ENCODE measurements at regions of chrX and their contacts with region 1.

Region 1: DNA sequence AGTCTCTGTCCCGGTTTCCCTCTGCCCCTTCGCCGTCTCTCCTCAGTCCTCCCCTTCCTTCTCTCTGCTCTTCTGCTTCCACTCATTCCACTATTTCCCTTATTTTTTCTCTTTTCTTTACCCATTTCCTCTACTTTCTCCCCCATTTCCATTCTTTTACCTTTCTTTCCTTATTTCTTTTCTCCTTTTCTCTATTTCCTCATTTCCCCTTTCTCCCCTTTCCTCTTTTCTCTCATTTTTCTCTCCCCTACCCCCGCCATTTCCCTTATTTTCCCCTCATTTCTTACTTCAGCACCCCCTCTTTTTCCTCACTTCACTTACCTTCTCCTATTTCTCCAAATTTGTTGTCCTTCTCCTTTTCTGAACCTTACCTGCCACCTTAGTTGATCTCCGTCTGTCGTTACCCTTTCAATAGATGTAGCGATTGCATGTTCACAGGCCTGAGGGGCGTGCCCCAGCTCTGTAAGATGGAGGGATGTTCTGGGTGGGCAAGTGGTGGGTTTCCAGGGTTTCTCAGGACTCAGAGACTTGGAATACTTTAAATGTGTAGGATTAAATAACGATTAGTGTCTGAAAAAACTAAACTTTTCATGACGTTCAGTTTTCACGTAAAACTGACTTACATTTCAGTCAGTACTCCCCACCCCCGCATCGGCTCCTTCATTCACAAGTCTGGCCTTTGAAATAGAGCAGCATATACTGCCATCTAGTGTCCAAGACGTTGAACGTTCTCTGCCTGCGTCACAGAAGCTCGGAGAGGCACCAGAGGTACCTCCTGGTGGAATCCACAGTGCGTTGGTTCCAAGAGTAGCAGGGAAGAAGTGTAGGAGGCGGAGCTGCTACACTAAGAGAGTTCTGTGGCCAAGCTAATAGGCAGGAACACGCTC is 641 bp upstream of the NCBP2L start:
- DNase-seq: peak; percentile 61 to 76
- ATAC-seq: peak; percentile 70 to 78 (median 73)
- H3K4me3 ChIP-seq: peak overlapping the region; percentile 72
- H3K27ac ChIP-seq: peak overlapping the region; percentile 84
- H3K4me1 ChIP-seq: peaks cover 6% of the 10 kb centered on the region
- H3K27me3 ChIP-seq: peaks cover 0 to 17% (median 0%) of the 10 kb centered on the region in 3 donors
- CTCF ChIP-seq: peak; percentile 81

Region 2: GRCh38 chrX:107654872-107655761 is 121.8 kb before region 1 on chrX:
- intact Hi-C with region 1: loop called (anchors 1 to 5 kb)
- DNase-seq: peak; percentile 59 to 82
- ATAC-seq: peak; percentile 75 to 87 (median 80)
- H3K4me3 ChIP-seq: no peak overlapping the region
- H3K27ac ChIP-seq: peak overlapping the region; percentile 41
- H3K4me1 ChIP-seq: no peaks in the 10 kb centered on the region
- H3K27me3 ChIP-seq: peaks cover 0 to 6% (median 0%) of the 10 kb centered on the region in 3 donors
- CTCF ChIP-seq: peak; percentile 64

Region 3: GRCh38 chrX:107672955-107673378 is 103.9 kb before region 1 on chrX:
- intact Hi-C with region 1: loop called in 1 of 2 experiments (anchors 2 kb)
- DNase-seq: peak; percentile 75 to 88
- ATAC-seq: peak; percentile 57 to 69 (median 62)
- H3K4me3 ChIP-seq: no peak overlapping the region
- H3K27ac ChIP-seq: peak overlapping the region; percentile 83
- H3K4me1 ChIP-seq: peaks cover 24% of the 10 kb centered on the region
- H3K27me3 ChIP-seq: peaks cover 0 to 7% (median 0%) of the 10 kb centered on the region in 3 donors
- CTCF ChIP-seq: peak; percentile 61

Region 4: GRCh38 chrX:107718156-107718621 is 58.7 kb before region 1 on chrX:
- intact Hi-C with region 1: loop called in 1 of 2 experiments (anchors 2 kb)
- DNase-seq: peak; percentile 64 to 75
- ATAC-seq: peak; percentile 62 to 74 (median 70)
- H3K4me3 ChIP-seq: no peak overlapping the region
- H3K27ac ChIP-seq: peak overlapping the region; percentile 86
- H3K4me1 ChIP-seq: peaks cover 30% of the 10 kb centered on the region
- H3K27me3 ChIP-seq: peaks cover 0 to 23% (median 0%) of the 10 kb centered on the region in 3 donors
- CTCF ChIP-seq: peak; percentile 88

Region 5: GRCh38 chrX:107731831-107732502 is 44.9 kb before region 1 on chrX:
- intact Hi-C with region 1: loop called in 1 of 2 experiments (anchors 5 kb)
- DNase-seq: peak; percentile 87 to 94
- ATAC-seq: peak; percentile 69 to 81 (median 79)
- H3K4me3 ChIP-seq: no peak overlapping the region
- H3K27ac ChIP-seq: peak overlapping the region; percentile 81
- H3K4me1 ChIP-seq: peaks cover 61% of the 10 kb centered on the region
- H3K27me3 ChIP-seq: peaks cover 0 to 3% (median 0%) of the 10 kb centered on the region in 3 donors
- CTCF ChIP-seq: no peak

Region 6: GRCh38 chrX:107894038-107894437 is 117.1 kb after region 1 on chrX:
- intact Hi-C with region 1: loop called in 1 of 2 experiments (anchors 5 kb)
- DNase-seq: no peak
- ATAC-seq: peak; percentile 69 to 89 (median 77)
- H3K4me3 ChIP-seq: no peak overlapping the region
- H3K27ac ChIP-seq: no peak overlapping the region
- H3K4me1 ChIP-seq: no peaks in the 10 kb centered on the region
- H3K27me3 ChIP-seq: peaks cover 0 to 18% (median 0%) of the 10 kb centered on the region in 3 donors
- CTCF ChIP-seq: peak; percentile 73

Measured in psoas muscle (tissue), 8 donors.